ENCODE measurements at regions of chr20 and their contacts with region 1.

Region 1: GRCh38 chr20:33791959-33792597 is 19.1 kb upstream of the CHMP4B start:
- DNase-seq: peak; percentile 60
- H3K4me3 Mint-ChIP-seq: no peak overlapping the region
- H3K27ac Mint-ChIP-seq: no peak overlapping the region
- H3K4me1 Mint-ChIP-seq: peaks cover 7% of the 10 kb centered on the region
- H3K27me3 Mint-ChIP-seq: no peaks in the 10 kb centered on the region

Region 2: GRCh38 chr20:33803921-33804337 is 11.9 kb after region 1 on chr20:
- CTCF ChIA-PET with region 1: interaction called, 12 read pairs
- POLR2A ChIA-PET with region 1: no interaction called
- intact Hi-C with region 1: no loop called
- DNase-seq: no peak
- H3K4me3 Mint-ChIP-seq: no peak overlapping the region
- H3K27ac Mint-ChIP-seq: no peak overlapping the region
- H3K4me1 Mint-ChIP-seq: no peaks in the 10 kb centered on the region
- H3K27me3 Mint-ChIP-seq: no peaks in the 10 kb centered on the region

Measured in activated CD4-positive, alpha-beta memory T cell treated with anti-CD3 and anti-CD28 coated beads for 36 hours (primary cell).